Ovary (tissue), 10 donors: ENCODE measurements at regions of chr1 and their contacts with region 1.

Region 1: GRCh38 chr1:53182111-53182593 is 14.5 kb upstream of the CPT2 start:
- DNase-seq: peak; percentile 85 to 92 (median 88)
- H3K4me3 ChIP-seq: no peak overlapping the region
- H3K27ac ChIP-seq: peak overlapping the region in 1 of 2 donors; percentile 72
- H3K4me1 ChIP-seq: peaks cover 19% of the 10 kb centered on the region
- H3K27me3 ChIP-seq: no peaks in the 10 kb centered on the region
- CTCF ChIP-seq: peak; percentile 79 to 94 (median 85)
- EP300 ChIP-seq: no peak
- POLR2A ChIP-seq: no peak

Region 2: GRCh38 chr1:52697795-52698674 is 484.1 kb before region 1 on chr1 and contains the start of gene COA7:
- intact Hi-C with region 1: loop called in 1 of 4 experiments (anchors 10 kb)
- DNase-seq: peak; percentile 87 to 93 (median 89)
- H3K4me3 ChIP-seq: peak within 1 kb of the TSS; percentile 82
- H3K27ac ChIP-seq: peak within 1 kb of the TSS; percentile 61 to 78
- H3K4me1 ChIP-seq: peaks cover 1% of the 10 kb centered on the region
- H3K27me3 ChIP-seq: no peaks in the 10 kb centered on the region
- CTCF ChIP-seq: no peak
- EP300 ChIP-seq: no peak
- POLR2A ChIP-seq: peak; percentile 50
- total RNA-seq, gene COA7: 3.5 to 27.2 (median 18.6) TPM

Region 3: GRCh38 chr1:52904927-52905698 is 277.0 kb before region 1 on chr1:
- intact Hi-C with region 1: loop called in 1 of 4 experiments (anchors 10 kb)
- DNase-seq: no peak
- H3K4me3 ChIP-seq: no peak overlapping the region
- H3K27ac ChIP-seq: no peak overlapping the region
- H3K4me1 ChIP-seq: no peaks in the 10 kb centered on the region
- H3K27me3 ChIP-seq: no peaks in the 10 kb centered on the region
- CTCF ChIP-seq: no peak
- EP300 ChIP-seq: no peak
- POLR2A ChIP-seq: no peak

Region 4: GRCh38 chr1:52920791-52921291 is 261.3 kb before region 1 on chr1:
- intact Hi-C with region 1: loop called in 1 of 4 experiments (anchors 5 kb)
- DNase-seq: peak in 3 of 5 donors; percentile 58 to 72 (median 65)
- H3K4me3 ChIP-seq: peak overlapping the region; percentile 60
- H3K27ac ChIP-seq: peak overlapping the region; percentile 93
- H3K4me1 ChIP-seq: peaks cover 26% of the 10 kb centered on the region
- H3K27me3 ChIP-seq: no peaks in the 10 kb centered on the region
- CTCF ChIP-seq: no peak
- EP300 ChIP-seq: no peak
- POLR2A ChIP-seq: no peak

Region 5: DNA sequence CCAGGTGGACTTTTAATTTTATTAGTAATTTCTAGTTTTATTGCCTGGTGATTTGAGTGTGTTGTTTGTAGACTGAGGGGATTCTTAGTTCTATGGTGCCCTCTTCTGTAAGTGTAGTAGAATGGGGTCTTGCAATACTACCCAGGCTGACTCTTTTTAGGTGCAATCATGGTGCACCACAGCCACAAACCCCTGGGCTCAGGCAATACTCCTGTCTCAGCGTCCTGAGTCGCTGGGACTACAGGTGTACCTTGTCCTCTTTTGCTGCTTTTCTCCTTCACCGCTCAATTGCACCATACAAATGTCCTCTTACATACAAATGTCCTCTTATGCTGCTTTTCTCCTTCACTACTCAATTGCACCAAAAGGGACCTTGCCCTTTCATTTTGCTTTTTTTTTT is 212.0 kb before region 1 on chr1:
- intact Hi-C with region 1: loop called in 1 of 4 experiments (anchors 10 kb)
- DNase-seq: no peak
- H3K4me3 ChIP-seq: no peak overlapping the region
- H3K27ac ChIP-seq: no peak overlapping the region
- H3K4me1 ChIP-seq: no peaks in the 10 kb centered on the region
- H3K27me3 ChIP-seq: no peaks in the 10 kb centered on the region
- CTCF ChIP-seq: no peak
- EP300 ChIP-seq: no peak
- POLR2A ChIP-seq: no peak

Region 6: GRCh38 chr1:53061859-53062707 is 120.1 kb before region 1 on chr1 and contains the start of gene PODN:
- intact Hi-C with region 1: loop called in 1 of 4 experiments (anchors 10 kb)
- DNase-seq: peak; percentile 79 to 88 (median 86)
- H3K4me3 ChIP-seq: peak within 1 kb of the TSS; percentile 78
- H3K27ac ChIP-seq: peak within 1 kb of the TSS; percentile 88 to 94
- H3K4me1 ChIP-seq: peaks cover 21% of the 10 kb centered on the region
- H3K27me3 ChIP-seq: no peaks in the 10 kb centered on the region
- CTCF ChIP-seq: no peak
- EP300 ChIP-seq: no peak
- POLR2A ChIP-seq: no peak
- total RNA-seq, gene PODN: 106 to 254 (median 154) TPM

Region 7: DNA sequence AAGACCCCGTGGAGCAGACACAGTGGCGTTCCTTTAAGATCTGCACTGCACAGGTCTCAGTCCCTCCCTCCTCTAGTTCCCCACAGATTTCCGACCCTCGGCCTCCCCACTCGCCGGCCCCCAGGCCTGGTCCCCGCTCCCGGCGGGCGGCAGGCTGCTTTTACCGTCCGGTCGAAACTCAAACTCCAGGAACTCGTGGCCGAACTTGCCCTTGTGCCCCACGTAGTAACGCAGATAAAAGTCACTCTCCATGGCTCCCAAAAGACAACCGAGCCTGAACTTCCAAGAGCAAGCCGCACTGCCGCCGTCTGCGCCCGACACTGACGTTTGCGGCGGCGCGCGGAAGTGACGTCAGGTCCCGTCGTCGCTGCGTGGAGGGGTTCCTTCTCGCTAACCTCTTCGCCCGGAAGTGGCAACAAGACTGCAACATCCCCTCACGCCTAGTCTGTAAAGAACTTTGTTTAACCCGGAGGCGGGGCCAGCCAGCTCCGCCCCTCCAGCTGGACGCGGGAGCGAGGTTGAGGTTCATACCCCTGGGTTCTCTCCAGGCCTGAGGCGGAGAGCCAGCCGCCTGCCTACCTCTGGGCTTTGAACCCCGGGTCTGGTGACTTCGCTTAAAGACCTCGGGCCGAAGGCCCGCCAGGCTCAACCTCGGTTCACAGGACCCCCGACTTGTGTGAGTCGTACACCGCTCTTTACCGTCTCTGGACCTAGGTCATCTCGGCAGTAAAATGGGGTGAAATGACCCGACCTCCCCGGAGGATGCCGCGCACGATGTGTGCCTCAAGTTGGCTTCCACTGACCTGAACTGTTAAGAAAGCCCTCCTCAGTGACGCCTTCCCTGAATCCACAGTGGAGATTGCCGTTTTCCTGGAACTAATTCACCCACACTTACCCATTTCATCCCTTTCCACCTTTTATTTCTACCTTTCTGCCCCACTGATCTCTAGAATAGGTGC is 56.3 kb after region 1 on chr1 and contains the start of gene MAGOH:
- intact Hi-C with region 1: no loop called
- DNase-seq: peak; percentile 91 to 96 (median 94)
- H3K4me3 ChIP-seq: peak within 1 kb of the TSS; percentile 62
- H3K27ac ChIP-seq: peak within 1 kb of the TSS; percentile 43 to 77
- H3K4me1 ChIP-seq: peaks cover 10% of the 10 kb centered on the region
- H3K27me3 ChIP-seq: no peaks in the 10 kb centered on the region
- CTCF ChIP-seq: peak in 1 of 3 donors; percentile 22
- EP300 ChIP-seq: no peak
- POLR2A ChIP-seq: peak; percentile 85
- total RNA-seq, gene MAGOH: 25.4 to 43.3 (median 35.3) TPM

Region 8: GRCh38 chr1:53725238-53725689 is 543.1 kb after region 1 on chr1:
- intact Hi-C with region 1: no loop called
- DNase-seq: no peak
- H3K4me3 ChIP-seq: no peak overlapping the region
- H3K27ac ChIP-seq: no peak overlapping the region
- H3K4me1 ChIP-seq: peaks cover 1% of the 10 kb centered on the region
- H3K27me3 ChIP-seq: no peaks in the 10 kb centered on the region
- CTCF ChIP-seq: no peak
- EP300 ChIP-seq: no peak
- POLR2A ChIP-seq: no peak